ENCODE measurements at regions of chr9 and their contacts with region 1.

Region 1: DNA sequence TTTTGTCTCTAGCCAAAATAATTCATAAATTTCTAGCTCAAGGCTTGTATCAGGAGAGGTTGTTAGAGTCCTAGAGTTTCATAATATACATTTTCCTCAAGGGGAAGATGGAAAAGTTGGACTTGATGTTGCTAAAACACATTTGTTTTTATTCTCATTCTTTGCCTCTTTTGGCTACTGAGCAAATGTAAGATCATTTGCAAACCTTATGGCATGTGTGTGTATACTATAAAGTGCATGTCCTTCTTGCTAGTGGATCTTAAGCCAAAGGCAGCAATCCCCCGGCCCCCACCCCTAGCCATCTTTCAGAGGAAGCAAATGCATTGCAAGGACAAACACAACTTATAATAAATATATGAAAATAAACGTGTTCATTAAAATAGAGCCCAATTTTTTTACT is 43.0 kb downstream of the ADAMTSL1 start:
- DNase-seq: no peak
- ATAC-seq: no peak
- H3K4me3 Mint-ChIP-seq: no peak overlapping the region
- H3K27ac Mint-ChIP-seq: no peak overlapping the region
- H3K4me1 Mint-ChIP-seq: no peaks in the 10 kb centered on the region
- H3K27me3 Mint-ChIP-seq: peaks cover 0 to 2% (median 0%) of the 10 kb centered on the region in 5 donors

Region 2: GRCh38 chr9:18689921-18690320 is 173.0 kb after region 1 on chr9:
- POLR2A ChIA-PET with region 1: interaction called, 10 read pairs
- DNase-seq: no peak
- ATAC-seq: no peak
- H3K4me3 Mint-ChIP-seq: no peak overlapping the region
- H3K27ac Mint-ChIP-seq: no peak overlapping the region
- H3K4me1 Mint-ChIP-seq: no peaks in the 10 kb centered on the region
- H3K27me3 Mint-ChIP-seq: peaks cover 0 to 13% (median 4%) of the 10 kb centered on the region in 5 donors

Measured in naive thymus-derived CD8-positive, alpha-beta T cell (primary cell).